ENCODE measurements at regions of chr2 and their contacts with region 1.

Region 1: DNA sequence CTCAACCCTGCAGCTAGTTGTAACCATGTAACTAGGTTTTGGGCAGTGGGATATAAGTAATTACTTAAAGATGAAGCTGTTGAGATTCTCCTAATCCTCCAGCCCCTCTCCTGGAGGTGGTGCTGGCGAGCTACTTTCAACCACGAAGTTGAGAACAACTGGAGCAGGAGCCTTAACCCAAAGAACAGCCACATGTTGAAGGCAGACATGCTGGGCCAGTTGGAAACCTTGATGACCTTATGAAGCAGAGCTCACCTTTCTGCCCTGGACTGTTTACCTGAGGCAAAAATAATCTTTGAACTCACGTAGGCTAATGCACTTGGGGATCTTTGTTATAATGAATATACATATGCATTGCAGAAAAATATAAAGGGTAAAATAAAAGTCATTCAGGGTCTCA is 89.6 kb upstream of the NPAS2 start:
- DNase-seq: peak; percentile 74
- H3K4me3 ChIP-seq: no peak overlapping the region
- H3K27ac ChIP-seq: no peak overlapping the region
- H3K4me1 ChIP-seq: peaks cover 26% of the 10 kb centered on the region
- H3K27me3 ChIP-seq: no peaks in the 10 kb centered on the region
- CTCF ChIP-seq: peak; percentile 76 to 90

Region 2: DNA sequence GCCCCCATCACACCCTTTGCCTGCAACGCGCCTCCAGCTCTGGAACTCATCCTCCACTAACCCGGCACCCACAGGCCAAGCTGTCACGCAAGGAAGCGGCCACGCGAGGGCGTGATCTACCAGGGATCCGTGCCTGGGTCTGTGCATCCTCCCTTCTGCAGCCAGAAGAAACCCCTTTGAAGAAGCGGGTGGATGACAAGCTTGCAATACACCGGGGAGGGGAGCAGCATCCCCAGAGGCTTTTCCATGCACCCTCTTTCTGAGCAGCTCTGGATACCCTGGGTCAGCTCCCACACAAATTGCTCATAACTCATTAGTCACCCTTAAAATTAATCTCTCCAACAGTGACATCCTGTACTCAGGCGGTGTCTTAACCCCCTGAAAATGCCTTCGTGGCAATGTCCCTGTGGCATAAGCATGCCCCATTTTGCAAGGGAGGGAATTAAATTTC is 119.9 kb before region 1 on chr2:
- CTCF ChIA-PET with region 1: no interaction called
- dilution Hi-C with region 1: no loop called
- in situ Hi-C with region 1: no loop called
- intact Hi-C with region 1: loop called (anchors 1 kb)
- DNase-seq: peak; percentile 37
- H3K4me3 ChIP-seq: no peak overlapping the region
- H3K27ac ChIP-seq: no peak overlapping the region
- H3K4me1 ChIP-seq: no peaks in the 10 kb centered on the region
- H3K27me3 ChIP-seq: no peaks in the 10 kb centered on the region
- CTCF ChIP-seq: peak; percentile 50 to 75

Region 3: DNA sequence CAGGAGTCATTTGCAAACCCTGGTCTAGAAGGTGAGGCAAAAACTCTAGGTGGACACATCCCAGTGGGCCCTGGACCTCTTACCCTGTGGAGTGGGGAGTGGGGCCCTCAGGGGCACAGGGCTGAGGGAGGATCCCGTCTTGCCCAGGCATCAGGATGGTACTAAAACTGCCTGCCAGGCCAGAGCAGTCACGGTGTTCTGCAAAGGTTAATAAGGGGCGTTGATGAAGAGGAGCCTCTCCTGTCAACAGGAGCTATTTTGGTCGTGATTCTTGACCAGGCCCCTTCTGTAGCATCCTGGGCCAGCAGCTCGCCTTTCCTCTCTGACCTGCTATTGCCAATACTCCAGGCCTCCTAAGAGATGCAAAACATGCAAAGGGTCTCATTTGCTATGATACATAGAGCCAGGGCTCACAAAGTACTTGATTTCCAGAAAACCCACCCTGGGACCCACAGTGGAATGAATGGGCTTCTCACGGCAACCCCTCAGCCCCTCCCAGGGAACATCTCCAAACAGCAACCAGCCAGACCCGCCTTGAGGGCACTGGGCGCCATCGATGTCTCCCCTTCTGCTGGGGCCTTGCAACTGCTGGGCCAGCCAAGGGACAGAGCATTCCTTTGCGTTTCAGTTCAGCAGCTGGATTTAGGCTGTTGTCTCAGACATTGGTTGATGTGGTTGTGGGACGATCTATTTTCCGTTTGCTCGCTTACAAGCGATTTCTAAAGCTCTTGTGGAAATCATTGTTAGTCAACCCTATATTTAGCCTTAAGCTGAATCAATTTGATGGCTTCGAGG is 56.5 kb before region 1 on chr2:
- CTCF ChIA-PET with region 1: no interaction called
- dilution Hi-C with region 1: no loop called
- in situ Hi-C with region 1: no loop called
- intact Hi-C with region 1: no loop called
- DNase-seq: no peak
- H3K4me3 ChIP-seq: no peak overlapping the region
- H3K27ac ChIP-seq: no peak overlapping the region
- H3K4me1 ChIP-seq: no peaks in the 10 kb centered on the region
- H3K27me3 ChIP-seq: peaks cover 1% of the 10 kb centered on the region
- CTCF ChIP-seq: no peak

Region 4: GRCh38 chr2:100786297-100786658 is 55.9 kb after region 1 on chr2:
- CTCF ChIA-PET with region 1: no interaction called
- dilution Hi-C with region 1: loop called (anchors 10 kb)
- in situ Hi-C with region 1: loop called in 1 of 2 experiments (anchors 10 kb)
- intact Hi-C with region 1: loop called (anchors 1 kb)
- DNase-seq: peak; percentile 95
- H3K4me3 ChIP-seq: peak overlapping the region in 2 of 3 experiments; percentile 11 to 19
- H3K27ac ChIP-seq: peak overlapping the region; percentile 92
- H3K4me1 ChIP-seq: peaks cover 46% of the 10 kb centered on the region
- H3K27me3 ChIP-seq: no peaks in the 10 kb centered on the region
- CTCF ChIP-seq: no peak

Region 5: GRCh38 chr2:100882645-100883613 is 152.6 kb after region 1 on chr2:
- CTCF ChIA-PET with region 1: no interaction called
- dilution Hi-C with region 1: no loop called
- in situ Hi-C with region 1: no loop called
- intact Hi-C with region 1: loop called (anchors 2 kb)
- DNase-seq: peak; percentile 91
- H3K4me3 ChIP-seq: no peak overlapping the region
- H3K27ac ChIP-seq: peak overlapping the region; percentile 3
- H3K4me1 ChIP-seq: peaks cover 19% of the 10 kb centered on the region
- H3K27me3 ChIP-seq: no peaks in the 10 kb centered on the region
- CTCF ChIP-seq: no peak

Region 6: DNA sequence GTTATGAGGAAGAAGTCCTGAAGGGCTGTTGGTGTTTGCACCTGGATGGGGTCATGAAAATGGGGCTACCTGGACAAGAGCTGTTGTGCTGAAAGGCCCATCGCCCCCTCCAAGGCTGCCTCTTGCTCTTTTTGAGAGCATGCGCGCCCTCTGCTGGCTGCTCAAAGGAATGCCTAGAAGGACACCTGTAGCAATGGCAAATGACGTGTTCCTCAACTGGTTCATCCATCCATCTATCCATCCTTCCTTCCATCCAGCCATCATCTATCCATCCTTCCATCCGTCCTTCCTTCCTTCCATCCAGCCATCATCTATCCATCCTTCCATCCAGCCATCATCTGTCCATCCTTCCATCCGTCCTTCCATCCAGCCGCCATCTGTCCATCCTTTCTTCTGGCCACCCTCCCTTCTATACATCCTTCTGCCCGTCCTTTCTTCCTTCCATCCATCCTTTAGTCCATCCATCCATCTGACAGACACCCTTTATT is 254.6 kb after region 1 on chr2:
- CTCF ChIA-PET with region 1: no interaction called
- dilution Hi-C with region 1: no loop called
- in situ Hi-C with region 1: loop called in 1 of 2 experiments (anchors 10 kb)
- intact Hi-C with region 1: loop called (anchors 1 kb)
- DNase-seq: peak; percentile 47
- H3K4me3 ChIP-seq: no peak overlapping the region
- H3K27ac ChIP-seq: no peak overlapping the region
- H3K4me1 ChIP-seq: no peaks in the 10 kb centered on the region
- H3K27me3 ChIP-seq: no peaks in the 10 kb centered on the region
- CTCF ChIP-seq: peak; percentile 83 to 88

Region 7: DNA sequence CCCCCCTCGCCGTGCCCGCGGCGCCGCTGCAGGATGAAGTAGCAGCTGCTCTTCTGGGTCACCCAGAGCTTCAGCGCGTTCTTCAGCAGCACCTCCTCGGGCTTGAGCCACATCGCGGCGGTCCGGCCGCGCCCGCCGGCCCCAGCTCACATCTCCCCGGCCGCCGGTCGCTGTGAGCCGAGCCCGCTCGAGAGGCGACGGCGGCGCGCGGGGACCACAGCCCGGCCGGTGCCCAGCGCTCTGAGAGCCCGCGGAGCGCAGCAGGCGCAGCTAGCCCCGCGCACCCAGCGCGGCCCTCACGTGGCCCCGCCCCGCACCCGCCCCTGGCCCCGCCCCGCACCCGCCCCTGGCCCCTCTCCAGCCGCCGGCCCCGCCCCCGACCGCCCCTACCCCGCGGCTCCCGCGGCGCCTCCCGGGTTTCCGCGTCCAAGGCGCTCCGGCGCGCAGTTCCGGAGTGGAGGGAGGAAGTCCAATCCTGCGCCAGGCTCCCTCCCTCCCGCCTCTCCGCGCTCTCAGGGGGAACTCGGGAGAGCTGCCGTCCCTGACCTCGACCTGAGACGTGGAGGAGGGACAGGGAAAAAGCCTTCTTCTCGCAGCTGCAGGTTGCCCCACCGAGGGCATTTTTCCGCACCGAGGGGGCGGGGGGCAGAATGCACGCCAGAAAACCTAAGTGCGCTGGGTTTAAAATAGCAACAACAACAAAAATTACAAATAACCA is 421.0 kb after region 1 on chr2 and contains the start of gene TBC1D8:
- CTCF ChIA-PET with region 1: no interaction called
- dilution Hi-C with region 1: no loop called
- in situ Hi-C with region 1: no loop called
- intact Hi-C with region 1: loop called (anchors 2 kb)
- DNase-seq: peak; percentile 74
- H3K4me3 ChIP-seq: peak within 1 kb of the TSS; percentile 76 to 83 (median 82)
- H3K27ac ChIP-seq: peak within 1 kb of the TSS; percentile 55
- H3K4me1 ChIP-seq: peaks cover 25% of the 10 kb centered on the region
- H3K27me3 ChIP-seq: no peaks in the 10 kb centered on the region
- CTCF ChIP-seq: no peak
- total RNA-seq, gene TBC1D8: 9.0 to 19.2 TPM

Region 8: GRCh38 chr2:101566632-101567228 is 836.4 kb after region 1 on chr2:
- CTCF ChIA-PET with region 1: no interaction called
- dilution Hi-C with region 1: no loop called
- in situ Hi-C with region 1: no loop called
- intact Hi-C with region 1: no loop called
- DNase-seq: no peak
- H3K4me3 ChIP-seq: no peak overlapping the region
- H3K27ac ChIP-seq: no peak overlapping the region
- H3K4me1 ChIP-seq: no peaks in the 10 kb centered on the region
- H3K27me3 ChIP-seq: no peaks in the 10 kb centered on the region
- CTCF ChIP-seq: no peak

Measured in mammary epithelial cell (primary cell).